Activated CD8-positive, alpha-beta memory T cell treated with anti-CD3 and anti-CD28 coated beads, Interleukin-2, amount 10 ng/mL, durations not matched to agents 7 days and 5 days (primary cell): ENCODE measurements at regions of chr11 and their contacts with region 1.

Region 1: GRCh38 chr11:34585735-34586487 is 35.0 kb upstream of the EHF start:
- DNase-seq: no peak
- ATAC-seq: no peak
- H3K4me3 Mint-ChIP-seq: no peak overlapping the region
- H3K27ac Mint-ChIP-seq: no peak overlapping the region
- H3K4me1 Mint-ChIP-seq: peaks cover 3% of the 10 kb centered on the region
- H3K27me3 Mint-ChIP-seq: peaks cover 71% of the 10 kb centered on the region

Region 2: GRCh38 chr11:34606326-34607120 is 20.6 kb after region 1 on chr11:
- CTCF ChIA-PET with region 1: no interaction called
- DNase-seq: no peak
- ATAC-seq: no peak
- H3K4me3 Mint-ChIP-seq: no peak overlapping the region
- H3K27ac Mint-ChIP-seq: no peak overlapping the region
- H3K4me1 Mint-ChIP-seq: no peaks in the 10 kb centered on the region
- H3K27me3 Mint-ChIP-seq: peaks cover 38% of the 10 kb centered on the region

Region 3: GRCh38 chr11:34656062-34656720 is 70.3 kb after region 1 on chr11:
- CTCF ChIA-PET with region 1: no interaction called
- DNase-seq: no peak
- ATAC-seq: no peak
- H3K4me3 Mint-ChIP-seq: no peak overlapping the region
- H3K27ac Mint-ChIP-seq: no peak overlapping the region
- H3K4me1 Mint-ChIP-seq: peaks cover 6% of the 10 kb centered on the region
- H3K27me3 Mint-ChIP-seq: peaks cover 91% of the 10 kb centered on the region

Region 4: DNA sequence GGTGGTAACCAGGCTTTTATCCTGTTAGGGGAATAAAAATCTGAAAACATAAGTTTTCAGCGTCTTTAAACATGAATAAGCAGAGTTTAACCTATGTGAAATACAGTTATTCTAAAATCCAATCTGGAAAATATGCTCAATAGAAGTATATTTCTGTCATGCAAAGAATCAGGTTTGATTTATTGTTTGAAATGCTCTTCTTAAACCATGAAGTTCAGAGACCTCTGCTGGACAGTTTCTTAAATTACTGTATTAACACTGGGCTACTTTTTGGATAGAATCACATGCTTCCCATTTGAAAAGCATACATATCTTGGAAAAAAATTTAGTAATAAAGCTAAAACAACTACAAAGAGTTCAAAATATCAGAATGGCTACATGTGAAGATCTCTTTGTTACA is 304.9 kb after region 1 on chr11:
- CTCF ChIA-PET with region 1: interaction called, 20 read pairs
- DNase-seq: no peak
- ATAC-seq: no peak
- H3K4me3 Mint-ChIP-seq: no peak overlapping the region
- H3K27ac Mint-ChIP-seq: no peak overlapping the region
- H3K4me1 Mint-ChIP-seq: no peaks in the 10 kb centered on the region
- H3K27me3 Mint-ChIP-seq: no peaks in the 10 kb centered on the region

Region 5: DNA sequence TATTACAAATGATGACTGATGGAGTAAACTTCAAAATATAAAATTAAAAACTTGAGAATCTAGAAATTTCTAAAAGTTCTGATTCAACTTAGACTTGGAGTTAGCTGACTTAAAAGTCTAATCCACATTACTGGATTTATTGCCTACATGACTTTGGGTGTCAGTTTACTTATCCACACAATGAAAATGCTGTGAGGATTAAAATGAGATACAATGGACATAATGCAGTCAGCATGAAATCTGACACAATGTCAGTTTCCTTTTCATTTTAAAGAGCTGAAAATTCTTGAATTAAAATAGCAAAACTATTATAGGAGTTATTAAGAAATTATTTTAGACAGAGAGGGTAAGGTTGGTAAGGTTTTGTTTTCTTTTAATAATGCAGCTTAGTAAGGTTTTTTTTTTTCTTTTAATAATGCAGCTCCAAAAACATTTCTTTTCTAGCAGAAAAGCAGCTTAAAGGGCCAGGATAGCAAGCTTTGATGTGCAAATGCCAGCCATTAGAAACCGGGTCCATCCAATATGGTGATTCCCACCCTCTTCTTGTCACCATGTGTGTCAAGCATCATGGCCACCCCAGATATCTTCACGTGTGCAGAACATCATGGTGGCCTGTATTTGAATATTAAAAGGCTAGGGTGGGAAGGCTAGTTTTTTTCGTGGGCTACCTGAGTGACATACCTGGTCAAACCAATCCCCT is 311.4 kb after region 1 on chr11:
- CTCF ChIA-PET with region 1: interaction called, 20 read pairs
- DNase-seq: no peak
- ATAC-seq: no peak
- H3K4me3 Mint-ChIP-seq: no peak overlapping the region
- H3K27ac Mint-ChIP-seq: no peak overlapping the region
- H3K4me1 Mint-ChIP-seq: no peaks in the 10 kb centered on the region
- H3K27me3 Mint-ChIP-seq: no peaks in the 10 kb centered on the region